ENCODE measurements at regions of chr7 and their contacts with region 1.

Region 1: DNA sequence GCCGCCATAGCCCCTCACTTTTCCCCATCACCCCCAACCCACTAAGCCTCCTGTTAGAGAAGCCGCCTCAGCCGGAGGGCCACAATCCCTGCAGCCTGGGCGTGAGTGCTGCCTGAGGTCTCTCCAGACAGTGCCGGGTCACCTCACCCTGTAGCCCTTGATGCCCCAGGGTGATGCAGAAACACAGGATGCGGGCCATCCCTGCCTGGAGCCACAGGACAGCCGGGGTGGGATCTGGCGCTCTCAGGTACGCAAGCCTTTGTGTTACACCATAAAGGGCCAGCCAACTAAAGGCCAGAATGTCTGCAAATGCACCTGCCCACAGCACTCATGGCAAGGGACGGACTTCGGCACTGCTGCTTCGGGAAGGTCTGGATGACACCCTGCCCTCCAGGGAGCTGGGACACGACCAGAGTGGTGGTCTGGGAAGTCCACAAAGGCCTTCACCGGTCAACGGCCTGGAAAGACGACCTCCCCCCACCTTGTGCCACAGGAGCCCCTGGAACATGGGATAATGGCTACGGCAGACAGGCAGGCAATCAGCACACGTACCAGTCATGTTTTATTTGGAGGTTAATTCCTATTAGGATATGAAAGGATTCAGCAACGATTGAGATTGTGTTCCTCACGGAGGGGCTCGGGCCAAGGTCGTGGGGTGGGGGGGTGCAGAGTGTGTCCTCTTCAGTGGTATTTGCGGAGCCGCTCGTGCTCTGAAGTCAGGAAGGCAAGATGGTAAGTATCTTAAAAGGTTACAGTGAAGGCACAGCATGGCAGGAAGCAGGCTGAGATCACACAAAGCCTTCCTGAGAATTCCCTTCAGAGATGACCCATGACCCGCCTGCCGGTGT is 8.1 kb downstream of the ATP5MF start:
- DNase-seq: no peak
- H3K4me3 ChIP-seq: no peak overlapping the region
- H3K27ac ChIP-seq: no peak overlapping the region
- H3K4me1 ChIP-seq: peaks cover 38% of the 10 kb centered on the region
- H3K27me3 ChIP-seq: no peaks in the 10 kb centered on the region
- CTCF ChIP-seq: no peak
- POLR2A ChIP-seq: no peak

Region 2: GRCh38 chr7:99325545-99326407 is 132.1 kb before region 1 on chr7 and contains the start of gene ARPC1A:
- intact Hi-C with region 1: no loop called
- DNase-seq: no peak
- H3K4me3 ChIP-seq: peak within 1 kb of the TSS; percentile 72 to 97
- H3K27ac ChIP-seq: peak within 1 kb of the TSS; percentile 81
- H3K4me1 ChIP-seq: peaks cover 51% of the 10 kb centered on the region
- H3K27me3 ChIP-seq: no peaks in the 10 kb centered on the region
- CTCF ChIP-seq: no peak
- POLR2A ChIP-seq: peak in 1 of 2 donors; percentile 43
- total RNA-seq, gene ARPC1A: 106 TPM

Region 3: GRCh38 chr7:99428972-99429566 is 28.8 kb before region 1 on chr7:
- intact Hi-C with region 1: loop called (anchors 1 kb)
- DNase-seq: no peak
- H3K4me3 ChIP-seq: no peak overlapping the region
- H3K27ac ChIP-seq: no peak overlapping the region
- H3K4me1 ChIP-seq: no peaks in the 10 kb centered on the region
- H3K27me3 ChIP-seq: no peaks in the 10 kb centered on the region
- CTCF ChIP-seq: no peak
- POLR2A ChIP-seq: no peak